Naive thymus-derived CD4-positive, alpha-beta T cell (primary cell): ENCODE measurements at regions of chr13 and their contacts with region 1.

Region 1: DNA sequence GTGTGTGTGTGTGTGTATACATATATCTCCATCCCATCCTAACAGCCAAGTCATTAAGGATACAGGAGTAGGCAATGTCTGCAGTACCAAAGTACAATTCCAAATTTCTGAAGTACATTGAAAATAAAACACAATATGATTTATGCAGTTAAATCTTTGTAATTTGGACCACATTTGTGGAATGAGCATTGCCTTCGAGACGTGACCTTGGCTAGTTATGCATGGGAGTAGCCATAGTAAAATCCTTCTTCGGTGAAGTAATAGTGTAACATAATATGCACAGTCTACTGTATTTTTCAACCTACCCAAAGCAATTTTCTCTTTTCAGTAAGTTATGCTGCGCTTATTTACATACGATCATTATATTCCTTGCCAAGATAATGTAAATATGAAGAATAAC is 665.7 kb upstream of the GPC6 start:
- DNase-seq: no peak
- ATAC-seq: no peak
- H3K4me3 ChIP-seq: no peak overlapping the region
- H3K4me3 Mint-ChIP-seq: no peak overlapping the region
- H3K27ac ChIP-seq: no peak overlapping the region
- H3K27ac Mint-ChIP-seq: no peak overlapping the region
- H3K4me1 ChIP-seq: no peaks in the 10 kb centered on the region
- H3K4me1 Mint-ChIP-seq: no peaks in the 10 kb centered on the region
- H3K27me3 ChIP-seq: no peaks in the 10 kb centered on the region
- H3K27me3 Mint-ChIP-seq: no peaks in the 10 kb centered on the region

Region 2: GRCh38 chr13:92510416-92510815 is 50.5 kb before region 1 on chr13:
- CTCF ChIA-PET with region 1: no interaction called
- POLR2A ChIA-PET with region 1: no interaction called
- intact Hi-C with region 1: loop called in 1 of 2 experiments (anchors 5 kb)
- DNase-seq: no peak
- ATAC-seq: no peak
- H3K4me3 ChIP-seq: no peak overlapping the region
- H3K4me3 Mint-ChIP-seq: no peak overlapping the region
- H3K27ac ChIP-seq: no peak overlapping the region
- H3K27ac Mint-ChIP-seq: no peak overlapping the region
- H3K4me1 ChIP-seq: no peaks in the 10 kb centered on the region
- H3K4me1 Mint-ChIP-seq: no peaks in the 10 kb centered on the region
- H3K27me3 ChIP-seq: no peaks in the 10 kb centered on the region
- H3K27me3 Mint-ChIP-seq: no peaks in the 10 kb centered on the region

Region 3: DNA sequence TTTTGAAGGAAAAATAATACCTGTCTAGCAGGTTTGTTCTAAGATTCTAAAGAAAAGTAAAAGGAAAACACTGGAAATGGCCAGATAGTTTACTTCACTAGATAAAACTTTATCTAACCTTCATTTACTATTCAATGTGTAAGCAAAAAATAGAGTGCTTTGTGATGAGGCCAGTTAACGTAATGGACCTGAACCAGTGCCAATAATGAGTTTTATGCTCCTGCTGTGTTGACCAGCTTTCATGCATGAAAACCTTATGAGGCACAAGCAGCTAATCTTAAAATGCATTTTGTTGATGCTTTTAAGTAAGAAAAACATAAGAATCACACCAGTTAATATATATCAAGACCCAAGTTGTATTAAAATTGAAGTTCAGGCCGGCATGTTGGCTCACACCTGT is 48.5 kb after region 1 on chr13:
- CTCF ChIA-PET with region 1: no interaction called
- POLR2A ChIA-PET with region 1: no interaction called
- intact Hi-C with region 1: no loop called
- DNase-seq: no peak
- ATAC-seq: no peak
- H3K4me3 ChIP-seq: no peak overlapping the region
- H3K4me3 Mint-ChIP-seq: no peak overlapping the region
- H3K27ac ChIP-seq: no peak overlapping the region
- H3K27ac Mint-ChIP-seq: no peak overlapping the region
- H3K4me1 ChIP-seq: no peaks in the 10 kb centered on the region
- H3K4me1 Mint-ChIP-seq: no peaks in the 10 kb centered on the region
- H3K27me3 ChIP-seq: no peaks in the 10 kb centered on the region
- H3K27me3 Mint-ChIP-seq: no peaks in the 10 kb centered on the region

Region 4: GRCh38 chr13:92864584-92865284 is 303.9 kb after region 1 on chr13:
- CTCF ChIA-PET with region 1: no interaction called
- POLR2A ChIA-PET with region 1: no interaction called
- intact Hi-C with region 1: no loop called
- DNase-seq: no peak
- ATAC-seq: no peak
- H3K4me3 ChIP-seq: no peak overlapping the region
- H3K4me3 Mint-ChIP-seq: no peak overlapping the region
- H3K27ac ChIP-seq: no peak overlapping the region
- H3K27ac Mint-ChIP-seq: no peak overlapping the region
- H3K4me1 ChIP-seq: no peaks in the 10 kb centered on the region
- H3K4me1 Mint-ChIP-seq: no peaks in the 10 kb centered on the region
- H3K27me3 ChIP-seq: no peaks in the 10 kb centered on the region
- H3K27me3 Mint-ChIP-seq: no peaks in the 10 kb centered on the region